Cardiac septum (tissue), 1 donor: ENCODE measurements at regions of chr19 and their contacts with region 1.

Region 1: DNA sequence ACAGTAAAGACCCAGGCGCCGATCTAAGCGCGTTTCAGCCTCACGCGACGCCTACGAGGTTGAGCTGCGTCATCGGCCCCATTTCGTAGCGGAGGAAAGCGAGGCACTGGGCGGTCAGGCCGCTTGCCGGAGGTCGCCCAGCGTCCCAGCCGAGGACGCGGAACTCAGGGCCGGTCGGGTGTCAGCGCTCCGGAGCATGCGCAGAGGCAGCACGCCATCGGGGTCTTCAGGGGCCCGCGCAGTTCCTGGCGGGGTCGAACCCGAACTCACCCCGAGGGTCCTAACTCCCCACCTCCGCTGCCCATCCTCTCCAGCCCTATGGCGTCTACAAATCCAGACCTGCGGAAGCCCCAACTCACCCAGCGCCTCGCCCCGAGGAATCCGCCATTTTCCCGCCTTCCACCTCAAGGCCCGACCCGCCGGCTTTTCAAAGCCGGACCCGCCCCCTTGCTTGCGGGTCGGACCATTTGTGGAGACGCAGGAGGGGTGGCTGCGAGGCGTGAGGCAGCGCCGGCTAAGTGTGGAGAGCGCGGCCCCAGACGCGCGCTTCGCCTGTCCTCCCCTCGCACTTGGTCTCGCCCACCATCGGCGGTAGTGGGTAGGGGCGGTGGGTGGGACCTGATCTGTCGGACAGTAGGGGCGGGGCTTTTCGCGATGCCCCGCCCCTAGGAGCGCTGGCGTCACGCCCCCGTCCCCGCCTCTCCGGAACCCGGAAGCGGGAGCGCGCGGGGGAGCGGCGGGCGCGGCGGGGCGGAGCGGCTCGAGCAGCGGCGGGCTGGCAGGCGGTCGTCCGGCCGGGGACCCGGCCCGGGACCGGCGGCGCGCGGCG is at the starts of genes HAUS8 and MYO9B:
- DNase-seq: peak; percentile 100
- total RNA-seq, gene HAUS8: 2.6 TPM
- total RNA-seq, gene MYO9B: 35.6 TPM

Region 2: GRCh38 chr19:17001603-17002183 is 73.6 kb before region 1 on chr19:
- intact Hi-C with region 1: no loop called
- DNase-seq: no peak

Region 3: DNA sequence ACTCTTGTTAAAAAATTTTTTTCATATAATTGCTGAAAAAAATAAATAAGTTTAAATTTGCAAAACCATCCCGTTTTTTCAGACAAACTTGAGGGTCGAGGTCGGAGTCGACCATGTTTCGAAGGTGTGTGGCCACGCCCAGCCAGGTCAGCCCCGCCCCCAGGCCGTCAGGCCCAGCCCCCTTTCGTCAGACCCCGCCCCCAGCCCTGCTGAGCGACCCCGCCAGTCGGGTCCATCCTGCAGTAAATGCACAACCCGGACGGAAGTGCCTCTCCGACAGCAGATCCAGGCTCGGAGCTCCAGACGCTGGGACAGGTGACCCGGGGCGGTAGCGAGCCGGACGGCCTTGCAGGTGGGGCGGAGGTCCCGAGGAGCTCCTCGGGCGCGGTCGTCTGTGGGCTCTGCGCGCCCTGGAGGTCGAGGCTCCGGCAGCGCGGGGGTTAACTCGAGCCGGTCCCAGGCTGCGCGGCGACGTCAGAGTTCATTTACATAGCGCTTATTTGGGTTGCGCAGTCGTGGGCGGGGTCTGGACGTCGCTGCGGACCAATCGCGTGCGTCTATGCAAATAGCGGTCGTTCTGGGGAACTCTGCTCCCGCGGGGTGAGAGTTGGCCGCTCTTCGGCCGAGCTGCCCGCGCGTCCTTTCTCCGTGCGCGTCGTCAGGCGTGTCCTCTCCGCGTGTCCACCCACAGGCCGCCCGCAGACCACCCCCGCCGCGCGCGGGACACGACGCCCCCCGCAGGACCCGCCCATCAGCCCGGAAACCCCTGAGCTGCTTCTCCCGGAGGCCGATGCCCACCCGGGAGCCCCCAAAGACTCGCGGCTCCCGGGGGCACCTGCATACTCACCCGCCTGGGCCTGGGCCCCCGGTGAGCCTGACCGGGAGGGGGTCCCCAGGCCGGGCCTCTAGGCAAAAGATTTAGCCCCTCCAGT is 151.0 kb after region 1 on chr19 and contains the start of gene OCEL1:
- intact Hi-C with region 1: loop called (anchors 5 kb)
- DNase-seq: peak; percentile 99
- total RNA-seq, gene OCEL1: 18.8 TPM